Activated naive CD4-positive, alpha-beta T cell treated with anti-CD3 and anti-CD28 coated beads for 36 hours (primary cell): ENCODE measurements at regions of chr12 and their contacts with region 1.

Region 1: DNA sequence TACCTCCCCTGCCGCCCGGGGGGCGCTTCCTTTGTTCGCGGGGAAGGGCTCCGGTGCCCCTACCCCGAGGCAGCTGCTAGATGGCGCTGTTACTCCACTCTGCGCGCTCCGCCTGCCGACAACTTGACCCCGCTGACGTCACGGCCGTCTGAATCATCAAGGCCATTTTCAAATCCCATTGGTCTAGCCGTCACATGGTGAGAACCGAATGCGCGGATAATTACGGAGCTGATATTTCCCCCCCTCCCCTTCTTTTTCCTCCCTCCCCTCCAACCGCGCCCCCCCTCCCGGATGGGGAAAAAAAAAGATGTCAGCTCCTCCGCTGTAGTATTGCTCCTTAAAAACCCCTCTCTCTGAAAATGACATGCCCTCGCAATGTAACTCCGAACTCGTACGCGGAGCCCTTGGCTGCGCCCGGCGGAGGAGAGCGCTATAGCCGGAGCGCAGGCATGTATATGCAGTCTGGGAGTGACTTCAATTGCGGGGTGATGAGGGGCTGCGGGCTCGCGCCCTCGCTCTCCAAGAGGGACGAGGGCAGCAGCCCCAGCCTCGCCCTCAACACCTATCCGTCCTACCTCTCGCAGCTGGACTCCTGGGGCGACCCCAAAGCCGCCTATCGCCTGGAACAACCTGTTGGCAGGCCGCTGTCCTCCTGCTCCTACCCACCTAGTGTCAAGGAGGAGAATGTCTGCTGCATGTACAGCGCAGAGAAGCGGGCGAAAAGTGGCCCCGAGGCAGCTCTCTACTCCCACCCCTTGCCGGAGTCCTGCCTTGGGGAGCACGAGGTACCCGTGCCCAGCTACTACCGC is at the start of gene HOXC10:
- DNase-seq: peak; percentile 95
- H3K4me3 Mint-ChIP-seq: peak within 1 kb of the TSS; percentile 38
- H3K27ac Mint-ChIP-seq: no peak within 1 kb of the TSS
- H3K4me1 Mint-ChIP-seq: peaks cover 28% of the 10 kb centered on the region
- H3K27me3 Mint-ChIP-seq: peaks cover 91% of the 10 kb centered on the region
- total RNA-seq, gene HOXC10: not detected

Region 2: DNA sequence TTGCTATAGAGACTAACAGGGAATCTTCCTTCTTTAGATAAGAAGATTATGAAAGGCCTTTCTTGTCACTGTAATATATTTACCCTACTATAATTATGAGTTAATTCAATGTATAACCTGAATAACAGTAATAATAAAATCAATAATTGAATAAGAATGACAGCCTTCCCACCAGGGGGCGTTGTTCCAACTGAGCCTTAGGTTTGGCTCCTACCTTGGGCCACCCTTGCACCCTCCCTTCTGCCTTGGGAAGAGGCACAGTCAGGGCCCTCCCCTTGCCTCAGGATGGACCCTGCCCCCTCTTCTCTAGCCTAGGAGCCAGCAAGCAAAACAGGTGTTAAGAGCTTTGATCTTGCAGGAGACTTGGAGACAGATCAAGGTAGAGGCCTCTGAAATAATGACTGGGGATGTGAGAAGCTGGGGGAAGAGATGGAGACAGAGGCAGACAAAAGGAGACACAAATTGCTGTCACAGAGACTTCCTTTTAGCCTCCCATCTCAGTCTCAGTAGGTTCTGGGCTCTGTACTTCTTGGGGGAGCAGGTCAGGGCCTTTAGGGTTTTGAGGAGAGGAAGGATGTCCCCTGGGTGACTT is 193.3 kb before region 1 on chr12:
- CTCF ChIA-PET with region 1: no interaction called
- intact Hi-C with region 1: loop called (anchors 5 kb)
- DNase-seq: peak; percentile 42
- H3K4me3 Mint-ChIP-seq: no peak overlapping the region
- H3K27ac Mint-ChIP-seq: no peak overlapping the region
- H3K4me1 Mint-ChIP-seq: no peaks in the 10 kb centered on the region
- H3K27me3 Mint-ChIP-seq: peaks cover 3% of the 10 kb centered on the region

Region 3: DNA sequence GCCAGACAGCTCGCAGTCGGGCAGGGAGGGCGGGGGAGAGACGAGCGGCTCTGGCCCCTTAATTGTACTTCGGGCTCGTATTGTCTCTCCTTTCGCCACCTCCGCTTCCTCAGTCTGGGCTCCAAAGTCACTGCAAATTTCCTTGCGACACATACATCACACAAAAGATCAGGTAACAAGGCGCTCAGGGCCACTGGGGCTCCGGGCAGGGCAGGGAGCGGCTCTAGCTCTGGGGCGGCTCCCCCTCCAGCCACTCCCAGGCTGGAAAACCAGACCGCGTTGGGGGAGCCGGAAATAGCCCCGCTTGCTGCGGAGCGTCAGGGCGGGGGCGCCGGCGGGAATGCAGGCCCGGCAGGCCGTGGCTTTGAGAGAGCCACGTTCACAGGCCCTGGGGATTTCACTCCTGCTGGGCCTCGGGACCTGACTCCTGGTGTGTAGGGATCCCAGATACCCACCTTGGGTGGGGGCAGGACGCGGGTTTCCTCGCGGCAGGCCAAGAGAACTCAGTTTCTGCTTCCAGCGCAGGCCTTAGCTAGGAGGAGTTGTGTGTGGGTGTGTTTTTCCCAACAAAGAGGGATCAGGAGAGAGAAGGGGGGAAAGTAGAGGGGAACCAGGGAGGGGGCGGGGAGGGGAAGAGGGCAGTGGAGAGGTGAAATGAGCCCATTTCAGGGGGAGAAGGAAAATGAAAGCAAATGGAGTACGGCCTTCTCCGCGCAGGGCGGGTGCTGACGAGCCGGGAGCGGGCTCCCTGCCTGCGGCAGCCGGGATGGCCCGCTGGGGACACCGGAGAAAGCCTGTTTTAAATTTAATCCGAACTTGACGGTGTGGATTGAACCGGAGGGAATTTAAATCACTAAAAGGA is 10.5 kb after region 1 on chr12:
- CTCF ChIA-PET with region 1: interaction called, 5 read pairs
- intact Hi-C with region 1: loop called (anchors 1 kb)
- DNase-seq: peak; percentile 36
- H3K4me3 Mint-ChIP-seq: peak overlapping the region; percentile 74
- H3K27ac Mint-ChIP-seq: no peak overlapping the region
- H3K4me1 Mint-ChIP-seq: peaks cover 36% of the 10 kb centered on the region
- H3K27me3 Mint-ChIP-seq: peaks cover 79% of the 10 kb centered on the region

Region 4: GRCh38 chr12:54191550-54192022 is 206.5 kb after region 1 on chr12:
- CTCF ChIA-PET with region 1: interaction called, 8 read pairs
- intact Hi-C with region 1: loop called (anchors 1 kb)
- DNase-seq: peak; percentile 84
- H3K4me3 Mint-ChIP-seq: no peak overlapping the region
- H3K27ac Mint-ChIP-seq: no peak overlapping the region
- H3K4me1 Mint-ChIP-seq: peaks cover 16% of the 10 kb centered on the region
- H3K27me3 Mint-ChIP-seq: peaks cover 35% of the 10 kb centered on the region

Region 5: DNA sequence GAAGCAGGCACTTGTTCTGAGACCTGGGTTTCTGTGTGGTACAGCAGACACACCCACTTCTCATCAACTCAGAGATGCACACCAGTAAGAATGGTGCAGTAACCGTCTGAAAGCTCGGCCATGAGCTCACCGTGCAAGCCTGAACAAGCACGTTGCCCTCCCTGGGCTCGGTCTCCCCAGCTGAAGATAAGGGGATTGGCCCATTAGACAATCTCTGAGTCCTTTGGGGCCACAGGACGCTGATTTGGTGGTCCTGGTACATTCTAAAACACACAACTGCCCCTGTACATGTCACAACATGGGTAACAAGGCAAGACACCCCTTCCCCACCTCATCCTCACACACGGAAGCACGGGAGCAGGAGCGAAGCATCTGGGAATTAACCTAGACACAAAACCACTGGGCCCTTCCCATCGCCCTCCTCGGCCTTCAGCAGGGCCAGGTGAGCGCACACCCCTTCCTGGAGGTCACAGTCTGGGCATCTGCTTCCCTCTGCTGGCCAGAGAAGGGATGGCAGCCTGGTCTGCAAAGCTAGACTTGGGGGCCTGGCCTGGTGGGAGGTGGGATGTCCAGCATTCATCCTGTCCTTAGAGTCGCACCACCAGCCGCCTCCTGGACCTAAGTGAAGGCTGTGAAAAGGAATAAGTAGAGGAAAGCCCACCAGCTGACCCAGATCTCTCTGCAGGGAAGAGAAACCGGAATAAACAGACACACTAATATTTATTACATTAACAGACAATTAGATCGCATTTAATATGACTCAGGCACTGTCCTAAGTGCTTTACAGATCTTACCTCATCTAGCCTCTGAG is 222.6 kb after region 1 on chr12:
- CTCF ChIA-PET with region 1: interaction called, 8 read pairs
- intact Hi-C with region 1: loop called (anchors 2 kb)
- DNase-seq: peak; percentile 88
- H3K4me3 Mint-ChIP-seq: no peak overlapping the region
- H3K27ac Mint-ChIP-seq: no peak overlapping the region
- H3K4me1 Mint-ChIP-seq: no peaks in the 10 kb centered on the region
- H3K27me3 Mint-ChIP-seq: peaks cover 9% of the 10 kb centered on the region